ENCODE measurements at regions of chr17 and their contacts with region 1.

Region 1: DNA sequence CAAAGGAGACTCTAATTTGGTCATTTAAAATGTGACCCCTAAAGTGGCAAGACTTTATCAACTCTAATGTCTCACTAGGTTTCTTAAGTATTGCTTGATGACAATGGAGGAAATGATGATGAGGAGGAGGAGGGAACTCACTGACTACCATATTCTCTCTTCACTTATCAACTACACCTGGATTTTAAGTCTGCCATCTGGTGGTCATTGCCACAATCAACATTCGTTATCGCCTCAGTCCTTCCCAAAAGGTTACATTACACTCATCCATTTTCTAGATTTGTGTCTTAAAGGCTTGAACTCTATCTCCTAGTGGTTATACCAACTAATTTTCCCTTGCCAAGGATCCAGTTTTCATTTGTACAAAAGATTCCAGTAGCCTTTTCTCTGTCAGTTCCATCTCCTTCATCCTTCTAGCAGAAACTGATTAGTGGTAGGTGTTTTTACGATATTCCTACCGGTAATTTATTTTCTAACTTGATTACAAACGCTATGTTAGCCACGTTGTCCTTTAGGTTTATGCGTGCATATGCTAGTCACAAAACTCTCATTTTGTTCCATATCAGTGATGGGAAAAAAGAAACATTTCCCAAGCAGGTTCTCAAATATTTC is 114.6 kb upstream of the NOG start:
- DNase-seq: peak; percentile 8
- ATAC-seq: peak; percentile 58; the same call in 1 of the 2 replicates
- H3K4me3 ChIP-seq: no peak overlapping the region
- H3K27ac ChIP-seq: no peak overlapping the region
- H3K4me1 ChIP-seq: no peaks in the 10 kb centered on the region
- H3K27me3 ChIP-seq: no peaks in the 10 kb centered on the region
- CTCF ChIP-seq: peak; percentile 61; the same call in 1 of the 2 replicates

Region 2: DNA sequence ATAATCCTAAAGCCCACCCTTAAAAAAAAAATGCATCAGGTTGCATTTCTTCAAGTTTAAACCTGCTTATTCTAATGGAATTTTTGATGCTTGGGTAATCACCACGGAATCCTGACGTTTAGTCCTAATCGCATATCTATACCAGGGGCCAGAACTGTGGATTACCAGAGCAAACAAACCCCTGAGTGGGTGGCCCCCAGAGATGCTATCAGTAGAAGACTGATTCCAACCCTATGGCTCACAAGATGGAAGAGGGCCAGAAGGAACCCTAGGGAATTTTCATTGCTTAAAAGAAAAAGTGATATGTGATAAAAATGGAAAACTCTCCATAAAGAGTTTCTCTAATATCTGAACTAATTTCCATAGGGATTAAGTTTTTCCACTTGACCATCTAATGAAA is 37.6 kb before region 1 on chr17:
- CTCF ChIA-PET with region 1: no interaction called
- POLR2A ChIA-PET with region 1: no interaction called
- in situ Hi-C with region 1: no loop called
- intact Hi-C with region 1: no loop called
- DNase-seq: no peak
- ATAC-seq: no peak
- H3K4me3 ChIP-seq: no peak overlapping the region
- H3K27ac ChIP-seq: no peak overlapping the region
- H3K4me1 ChIP-seq: no peaks in the 10 kb centered on the region
- H3K27me3 ChIP-seq: peaks cover 6% of the 10 kb centered on the region; the same call in 1 of the 2 replicates
- CTCF ChIP-seq: no peak

Region 3: DNA sequence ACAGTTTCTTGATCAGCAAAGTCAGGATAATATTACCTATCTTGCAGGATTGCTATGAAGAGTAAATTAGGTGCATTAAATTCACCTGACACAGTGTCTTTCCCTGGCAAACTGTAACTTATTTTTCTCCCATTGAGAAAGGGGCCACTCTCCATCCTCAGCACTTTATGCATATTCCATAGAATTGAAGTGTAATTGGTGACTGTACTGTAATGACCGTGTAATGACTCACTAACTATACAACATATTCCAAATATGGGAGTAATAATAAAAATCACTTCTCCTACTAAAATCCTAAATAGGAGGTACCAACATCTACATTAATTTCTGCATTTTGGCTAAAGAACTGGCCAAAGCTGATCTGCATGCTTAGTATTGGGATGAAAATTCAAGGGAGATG is 27.3 kb before region 1 on chr17:
- CTCF ChIA-PET with region 1: no interaction called
- POLR2A ChIA-PET with region 1: no interaction called
- in situ Hi-C with region 1: no loop called
- intact Hi-C with region 1: no loop called
- DNase-seq: no peak
- ATAC-seq: no peak
- H3K4me3 ChIP-seq: no peak overlapping the region
- H3K27ac ChIP-seq: no peak overlapping the region
- H3K4me1 ChIP-seq: no peaks in the 10 kb centered on the region
- H3K27me3 ChIP-seq: peaks cover 4% of the 10 kb centered on the region
- CTCF ChIP-seq: no peak

Region 4: DNA sequence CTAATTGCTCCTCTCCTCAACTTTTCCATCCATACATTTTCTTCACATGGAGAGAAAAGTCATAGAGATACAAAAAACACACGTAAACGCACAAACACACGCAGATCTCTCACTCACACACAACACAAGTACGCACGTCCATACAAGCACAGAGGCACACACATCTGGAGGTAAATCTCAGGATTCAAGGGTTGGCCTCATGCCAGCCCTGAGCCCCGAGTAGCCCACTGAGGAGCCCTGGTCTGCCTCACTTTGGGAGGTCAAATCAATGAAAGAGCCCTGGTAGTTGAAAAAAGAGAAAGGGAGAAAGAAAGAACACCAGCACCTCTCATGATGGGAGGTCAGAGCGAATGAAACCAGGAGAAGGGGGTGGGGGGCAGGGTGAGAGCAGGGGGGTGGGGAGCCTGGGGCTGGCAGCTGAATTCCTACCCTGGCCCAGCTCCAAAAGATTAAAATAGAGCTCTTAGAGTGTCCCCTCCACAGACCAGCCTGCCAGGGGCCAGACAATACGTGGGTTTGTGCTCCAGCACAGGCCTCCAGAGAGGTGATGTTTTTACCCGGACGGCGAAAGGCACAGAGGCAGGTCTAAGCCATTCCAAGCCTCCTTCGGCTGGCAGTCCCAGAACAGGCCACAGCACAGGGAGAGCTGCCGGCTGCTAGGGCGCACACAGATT is 42.3 kb after region 1 on chr17:
- CTCF ChIA-PET with region 1: no interaction called
- POLR2A ChIA-PET with region 1: no interaction called
- in situ Hi-C with region 1: no loop called
- intact Hi-C with region 1: no loop called
- DNase-seq: no peak
- ATAC-seq: no peak
- H3K4me3 ChIP-seq: no peak overlapping the region
- H3K27ac ChIP-seq: no peak overlapping the region
- H3K4me1 ChIP-seq: no peaks in the 10 kb centered on the region
- H3K27me3 ChIP-seq: peaks cover 7% of the 10 kb centered on the region; the same call in 1 of the 2 replicates
- CTCF ChIP-seq: no peak

Region 5: DNA sequence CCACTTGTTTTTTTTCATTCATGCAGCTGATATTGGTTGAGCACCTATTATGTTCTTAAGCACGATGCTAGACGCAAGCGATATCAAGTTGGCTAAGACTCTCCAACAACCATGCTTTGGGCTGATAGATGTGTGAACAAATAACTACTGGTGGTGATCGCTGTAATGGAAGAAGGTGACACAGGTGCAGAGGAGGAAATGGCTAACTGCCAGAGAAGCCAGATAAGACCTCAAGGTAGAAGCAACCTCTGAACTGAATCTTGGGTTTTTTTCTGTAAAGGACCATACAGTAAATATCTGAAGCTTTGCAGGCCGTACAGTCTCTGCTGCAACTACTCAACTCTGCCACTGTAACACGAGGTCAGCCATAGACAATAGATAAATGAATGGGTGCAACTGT is 256.9 kb after region 1 on chr17:
- CTCF ChIA-PET with region 1: interaction called, 13 read pairs
- POLR2A ChIA-PET with region 1: no interaction called
- in situ Hi-C with region 1: no loop called
- intact Hi-C with region 1: no loop called
- DNase-seq: no peak
- ATAC-seq: no peak
- H3K4me3 ChIP-seq: no peak overlapping the region
- H3K27ac ChIP-seq: no peak overlapping the region
- H3K4me1 ChIP-seq: no peaks in the 10 kb centered on the region
- H3K27me3 ChIP-seq: no peaks in the 10 kb centered on the region
- CTCF ChIP-seq: no peak

Measured in Panc1 (cell line).